ENCODE measurements at regions of chr22 and their contacts with region 1.

Region 1: GRCh38 chr22:28791841-28792490 is 8.4 kb downstream of the XBP1 start:
- DNase-seq: no peak
- H3K4me3 ChIP-seq: no peak overlapping the region
- H3K4me3 Mint-ChIP-seq: no peak overlapping the region
- H3K27ac ChIP-seq: peak overlapping the region; percentile 14 to 49
- H3K27ac Mint-ChIP-seq: peak overlapping the region in 5 of 7 donors; percentile 36 to 60 (median 46)
- H3K4me1 ChIP-seq: no peaks in the 10 kb centered on the region
- H3K4me1 Mint-ChIP-seq: peaks cover 34% of the 10 kb centered on the region
- H3K27me3 ChIP-seq: no peaks in the 10 kb centered on the region
- H3K27me3 Mint-ChIP-seq: no peaks in the 10 kb centered on the region
- CTCF ChIP-seq: no peak

Region 2: DNA sequence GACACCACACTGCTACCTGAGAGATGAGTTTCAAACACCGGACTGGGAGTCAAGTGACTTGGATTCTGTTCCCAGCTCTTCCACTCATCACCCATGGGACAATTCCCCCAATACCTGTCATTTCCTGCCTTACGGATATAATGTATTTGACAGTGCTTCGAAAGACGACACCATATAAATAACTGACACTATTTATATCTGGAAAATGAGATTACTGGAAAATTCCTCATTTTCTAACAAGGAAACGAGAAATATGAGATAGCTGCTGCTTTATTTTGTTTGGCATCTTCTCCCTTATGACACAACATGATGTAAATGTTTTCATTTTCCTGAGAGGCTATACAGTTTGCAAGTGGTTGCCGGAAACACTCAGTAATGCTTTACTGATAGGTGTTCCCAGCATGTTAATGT is 41.5 kb before region 1 on chr22:
- intact Hi-C with region 1: no loop called
- DNase-seq: no peak
- H3K4me3 ChIP-seq: no peak overlapping the region
- H3K4me3 Mint-ChIP-seq: no peak overlapping the region
- H3K27ac ChIP-seq: no peak overlapping the region
- H3K27ac Mint-ChIP-seq: no peak overlapping the region
- H3K4me1 ChIP-seq: peaks cover 14 to 18% of the 10 kb centered on the region in 2 donors
- H3K4me1 Mint-ChIP-seq: peaks cover 17% of the 10 kb centered on the region
- H3K27me3 ChIP-seq: no peaks in the 10 kb centered on the region
- H3K27me3 Mint-ChIP-seq: peaks cover 0 to 8% (median 0%) of the 10 kb centered on the region in 3 donors
- CTCF ChIP-seq: no peak

Region 3: DNA sequence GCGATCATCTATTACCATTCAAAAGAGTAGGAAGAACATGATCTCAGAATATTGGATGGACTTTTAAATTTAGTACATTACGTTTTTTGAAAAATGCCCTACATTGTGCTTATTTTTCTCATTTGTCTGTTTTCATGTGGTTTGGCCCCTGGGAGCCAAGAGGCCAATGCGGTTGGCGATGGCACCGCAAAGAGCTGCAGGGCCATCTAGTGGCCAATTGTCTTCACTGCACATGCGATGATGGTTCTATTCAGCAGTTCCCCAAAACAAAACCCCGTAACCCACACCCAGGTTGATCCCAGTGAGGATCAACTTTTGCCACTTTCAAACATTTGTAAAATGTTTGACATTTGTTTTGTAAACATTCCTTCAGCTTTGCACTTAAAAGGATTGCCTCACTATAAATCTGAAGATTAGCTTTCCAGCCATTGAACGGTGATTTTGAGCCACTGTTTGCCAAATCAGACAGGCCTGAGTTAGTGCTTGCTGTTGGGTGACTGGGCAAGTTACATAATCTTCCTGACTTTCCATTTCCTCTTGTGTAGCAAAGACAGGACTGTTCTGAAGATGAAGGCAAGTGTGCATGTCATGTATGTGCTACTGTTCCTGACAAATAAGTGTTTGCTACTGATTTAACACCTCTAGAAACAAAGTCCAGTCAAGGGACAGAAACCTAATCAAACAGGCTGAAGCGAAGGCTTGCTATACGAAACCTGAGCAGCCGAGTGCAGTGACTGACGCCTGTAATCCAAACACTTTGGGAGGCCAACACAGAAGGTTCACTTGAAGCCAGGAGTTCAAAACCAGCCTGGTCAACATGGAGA is 37.6 kb after region 1 on chr22:
- intact Hi-C with region 1: loop called (anchors 5 kb)
- DNase-seq: peak; percentile 80 to 81 (median 80)
- H3K4me3 ChIP-seq: peak overlapping the region in 2 of 3 experiments; percentile 25 to 66
- H3K4me3 Mint-ChIP-seq: peak overlapping the region; percentile 56 to 83
- H3K27ac ChIP-seq: peak overlapping the region; percentile 36 to 73
- H3K27ac Mint-ChIP-seq: peak overlapping the region; percentile 62 to 89 (median 80)
- H3K4me1 ChIP-seq: peaks cover 21 to 26% of the 10 kb centered on the region in 2 donors
- H3K4me1 Mint-ChIP-seq: peaks cover 45% of the 10 kb centered on the region
- H3K27me3 ChIP-seq: no peaks in the 10 kb centered on the region
- H3K27me3 Mint-ChIP-seq: peaks cover 0 to 3% (median 0%) of the 10 kb centered on the region in 3 donors
- CTCF ChIP-seq: peak; percentile 97

Measured in CD14-positive monocyte (primary cell).